Left ventricle myocardium superior (tissue), 1 donor: ENCODE measurements at regions of chr11 and their contacts with region 1.

Region 1: GRCh38 chr11:101860696-101861427 is 53.9 kb upstream of the CEP126 start:
- DNase-seq: peak; percentile 30
- ATAC-seq: peak; percentile 86

Region 2: GRCh38 chr11:101797335-101797734 is 63.5 kb before region 1 on chr11:
- intact Hi-C with region 1: no loop called
- DNase-seq: no peak
- ATAC-seq: no peak

Region 3: GRCh38 chr11:102007567-102008437 is 146.9 kb after region 1 on chr11:
- intact Hi-C with region 1: loop called (anchors 2 kb)
- DNase-seq: no peak
- ATAC-seq: peak; percentile 52

Region 4: GRCh38 chr11:102026212-102026611 is 165.3 kb after region 1 on chr11:
- intact Hi-C with region 1: no loop called
- DNase-seq: no peak
- ATAC-seq: no peak